ENCODE measurements at regions of chr16 and their contacts with region 1.

Region 1: GRCh38 chr16:28943281-28943680 is 7.5 kb upstream of the NFATC2IP start:
- DNase-seq: no peak
- H3K4me3 ChIP-seq: no peak overlapping the region
- H3K27ac ChIP-seq: no peak overlapping the region
- H3K4me1 ChIP-seq: peaks cover 3 to 4% of the 10 kb centered on the region in 2 experiments; a peak in 1 of 4 replicates
- H3K27me3 ChIP-seq: no peaks in the 10 kb centered on the region
- CTCF ChIP-seq: no peak
- EP300 ChIP-seq: no peak
- RAD21 ChIP-seq: no peak

Region 2: GRCh38 chr16:28823872-28824716 is 119.2 kb before region 1 on chr16:
- CTCF ChIA-PET with region 1: interaction called, 12 read pairs
- POLR2A ChIA-PET with region 1: no interaction called
- DNase-seq: peak; percentile 96
- H3K4me3 ChIP-seq: peak overlapping the region; percentile 81 to 90
- H3K27ac ChIP-seq: peak overlapping the region; percentile 91 to 95
- H3K4me1 ChIP-seq: peaks cover 9 to 13% of the 10 kb centered on the region in 2 experiments; a peak in 3 of 4 replicates
- H3K27me3 ChIP-seq: no peaks in the 10 kb centered on the region
- CTCF ChIP-seq: peak; percentile 33; the same call in 1 of the 2 replicates
- EP300 ChIP-seq: no peak
- RAD21 ChIP-seq: no peak

Region 3: DNA sequence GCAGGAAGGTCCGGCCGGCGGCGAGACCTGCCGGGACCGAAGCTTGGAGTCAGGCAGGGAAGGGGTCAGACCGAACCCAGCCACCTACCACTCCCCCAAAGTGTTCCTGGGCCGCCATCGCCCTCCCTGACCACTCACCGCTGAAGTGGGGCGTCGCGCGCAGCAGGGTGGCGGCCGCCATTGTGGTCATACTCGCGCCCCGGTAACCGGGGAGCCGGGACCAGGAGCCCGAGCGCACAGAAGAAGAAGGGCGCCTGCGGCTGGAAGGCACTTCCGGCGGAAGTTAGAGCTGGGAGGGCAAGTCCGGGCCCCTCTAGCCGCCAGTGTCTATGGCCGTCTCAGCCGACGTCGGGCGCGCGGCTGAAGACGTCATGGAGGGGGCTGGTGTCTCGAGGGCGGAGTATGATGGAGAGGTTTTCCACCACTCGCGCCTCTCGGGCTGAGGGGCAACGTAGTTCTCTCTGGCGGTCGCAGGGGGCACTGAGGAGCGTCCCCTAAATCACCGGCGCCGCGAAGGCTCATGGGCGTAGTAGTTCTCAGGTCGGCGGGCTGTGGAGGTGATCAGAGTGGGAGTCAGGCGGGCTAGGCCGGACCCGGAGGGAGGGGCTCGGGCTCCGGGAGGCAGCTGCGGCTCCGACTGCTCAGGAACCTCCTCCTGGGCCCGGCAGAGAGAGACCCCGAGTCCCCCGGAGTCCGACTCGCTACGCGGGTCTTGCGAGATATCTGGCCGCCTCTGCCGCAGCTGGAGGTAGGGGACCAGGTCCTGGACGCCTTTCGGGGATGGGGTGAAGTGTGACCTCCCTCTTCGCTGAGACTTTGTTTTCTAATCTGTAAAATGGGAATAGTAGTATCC is 97.0 kb before region 1 on chr16 and contains the start of gene TUFM:
- CTCF ChIA-PET with region 1: interaction called, 15 read pairs
- POLR2A ChIA-PET with region 1: interaction called, 3 read pairs
- DNase-seq: peak; percentile 97
- H3K4me3 ChIP-seq: peak within 1 kb of the TSS; percentile 91 to 94
- H3K27ac ChIP-seq: peak within 1 kb of the TSS; percentile 63 to 80
- H3K4me1 ChIP-seq: peaks cover 7 to 14% of the 10 kb centered on the region in 2 experiments; a peak in 1 of 4 replicates
- H3K27me3 ChIP-seq: no peaks in the 10 kb centered on the region
- CTCF ChIP-seq: peak; percentile 63
- EP300 ChIP-seq: peak in 1 of 2 experiments; percentile 33; a peak in 2 of 4 replicates
- RAD21 ChIP-seq: peak; percentile 37
- polyA plus RNA-seq, gene TUFM: 300 and 358 TPM in 2 replicates

Region 4: GRCh38 chr16:28863929-28864793 is 79.1 kb before region 1 on chr16:
- CTCF ChIA-PET with region 1: interaction called, 20 read pairs
- POLR2A ChIA-PET with region 1: interaction called, 9 read pairs
- DNase-seq: peak; percentile 60
- H3K4me3 ChIP-seq: peak overlapping the region; percentile 87 to 94
- H3K27ac ChIP-seq: peak overlapping the region; percentile 97 to 98
- H3K4me1 ChIP-seq: peaks cover 13 to 14% of the 10 kb centered on the region in 2 experiments; a peak in 3 of 4 replicates
- H3K27me3 ChIP-seq: no peaks in the 10 kb centered on the region
- CTCF ChIP-seq: no peak
- EP300 ChIP-seq: no peak
- RAD21 ChIP-seq: no peak

Region 5: GRCh38 chr16:28925386-28926228 is 17.7 kb before region 1 on chr16:
- CTCF ChIA-PET with region 1: interaction called, 10 read pairs
- POLR2A ChIA-PET with region 1: interaction called, 3 read pairs
- DNase-seq: no peak
- H3K4me3 ChIP-seq: peak overlapping the region; percentile 63 to 96
- H3K27ac ChIP-seq: peak overlapping the region; percentile 90 to 98
- H3K4me1 ChIP-seq: peaks cover 0 to 5% of the 10 kb centered on the region in 2 experiments; a peak in 1 of 4 replicates
- H3K27me3 ChIP-seq: no peaks in the 10 kb centered on the region
- CTCF ChIP-seq: no peak
- EP300 ChIP-seq: no peak; a peak in 1 of 4 replicates
- RAD21 ChIP-seq: no peak

Region 6: GRCh38 chr16:28931801-28932225 is 11.5 kb before region 1 on chr16 and contains the start of gene CD19:
- CTCF ChIA-PET with region 1: interaction called, 14 read pairs
- POLR2A ChIA-PET with region 1: interaction called, 3 read pairs
- DNase-seq: no peak
- H3K4me3 ChIP-seq: no peak within 1 kb of the TSS
- H3K27ac ChIP-seq: no peak within 1 kb of the TSS
- H3K4me1 ChIP-seq: no peaks in the 10 kb centered on the region
- H3K27me3 ChIP-seq: no peaks in the 10 kb centered on the region
- CTCF ChIP-seq: no peak
- EP300 ChIP-seq: no peak
- RAD21 ChIP-seq: no peak
- polyA plus RNA-seq, gene CD19: not detected in 2 replicates